GM12878 (cell line): ENCODE measurements at regions of chr4 and their contacts with region 1.

Region 1: DNA sequence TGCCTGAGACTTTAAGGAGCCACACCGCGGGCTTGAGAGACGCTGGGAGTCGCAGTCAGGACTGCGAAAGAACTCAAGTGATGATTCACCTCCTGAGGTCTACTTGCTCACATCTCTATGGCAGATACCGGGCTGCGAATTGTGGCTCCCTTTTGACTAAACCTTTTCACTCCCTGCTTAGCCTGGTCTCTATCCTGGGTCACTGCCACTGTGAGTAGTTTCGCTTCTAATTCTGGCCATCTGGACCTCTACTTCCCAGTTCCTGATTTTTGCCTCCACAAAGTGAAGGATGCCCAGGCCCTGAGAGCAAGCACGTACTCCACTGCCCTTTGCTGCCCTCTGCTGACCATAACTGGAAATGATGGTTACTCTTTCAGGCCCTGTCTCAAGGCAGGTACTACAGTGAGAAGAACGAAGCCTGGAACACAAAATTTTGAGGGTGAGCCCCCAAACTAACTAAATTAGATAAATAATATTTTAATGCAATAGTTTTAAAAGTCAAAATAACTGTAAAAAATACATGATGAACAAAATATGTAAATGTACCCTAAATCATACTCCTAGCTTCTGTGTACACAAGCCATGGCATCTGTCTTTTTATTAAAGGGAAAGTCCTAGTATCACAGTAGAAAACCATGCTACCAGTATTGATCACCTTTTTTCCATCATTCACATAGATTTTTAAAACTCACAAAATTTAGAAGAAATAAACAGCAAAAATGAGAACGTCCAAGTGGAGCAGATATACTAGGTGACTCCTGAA is 16.7 kb downstream of the MAD2L1 start:
- DNase-seq: peak; percentile 64
- ATAC-seq: peak; percentile 97
- H3K4me3 ChIP-seq: no peak overlapping the region; the same call in 1 of the 2 replicates
- H3K27ac ChIP-seq: no peak overlapping the region
- H3K4me1 ChIP-seq: peaks cover 16% of the 10 kb centered on the region
- H3K27me3 ChIP-seq: no peaks in the 10 kb centered on the region
- CTCF ChIP-seq: peak; percentile 83 to 89 (median 86)
- EP300 ChIP-seq: no peak
- POLR2A ChIP-seq: no peak
- RAD21 ChIP-seq: peak; percentile 92

Region 2: GRCh38 chr4:118974758-118975157 is 1075.2 kb before region 1 on chr4:
- CTCF ChIA-PET with region 1: no interaction called
- POLR2A ChIA-PET with region 1: no interaction called
- RAD21 ChIA-PET with region 1: no interaction called
- SMC1A ChIA-PET with region 1: no interaction called
- in situ Hi-C with region 1: loop called (anchors 10 kb)
- intact Hi-C with region 1: no loop called
- DNase-seq: no peak
- ATAC-seq: no peak
- H3K4me3 ChIP-seq: no peak overlapping the region
- H3K27ac ChIP-seq: no peak overlapping the region
- H3K4me1 ChIP-seq: no peaks in the 10 kb centered on the region
- H3K27me3 ChIP-seq: no peaks in the 10 kb centered on the region
- CTCF ChIP-seq: no peak
- EP300 ChIP-seq: no peak
- POLR2A ChIP-seq: no peak
- RAD21 ChIP-seq: no peak

Region 3: GRCh38 chr4:118981839-118982381 is 1068.0 kb before region 1 on chr4:
- CTCF ChIA-PET with region 1: no interaction called
- POLR2A ChIA-PET with region 1: no interaction called
- RAD21 ChIA-PET with region 1: no interaction called
- SMC1A ChIA-PET with region 1: interaction called, 3 read pairs
- in situ Hi-C with region 1: loop called (anchors 10 kb)
- intact Hi-C with region 1: loop called (anchors 5 kb)
- DNase-seq: no peak
- ATAC-seq: peak; percentile 94
- H3K4me3 ChIP-seq: no peak overlapping the region
- H3K27ac ChIP-seq: no peak overlapping the region
- H3K4me1 ChIP-seq: no peaks in the 10 kb centered on the region
- H3K27me3 ChIP-seq: no peaks in the 10 kb centered on the region
- CTCF ChIP-seq: peak; percentile 70 to 80 (median 79)
- EP300 ChIP-seq: no peak
- POLR2A ChIP-seq: no peak
- RAD21 ChIP-seq: peak; percentile 98

Region 4: DNA sequence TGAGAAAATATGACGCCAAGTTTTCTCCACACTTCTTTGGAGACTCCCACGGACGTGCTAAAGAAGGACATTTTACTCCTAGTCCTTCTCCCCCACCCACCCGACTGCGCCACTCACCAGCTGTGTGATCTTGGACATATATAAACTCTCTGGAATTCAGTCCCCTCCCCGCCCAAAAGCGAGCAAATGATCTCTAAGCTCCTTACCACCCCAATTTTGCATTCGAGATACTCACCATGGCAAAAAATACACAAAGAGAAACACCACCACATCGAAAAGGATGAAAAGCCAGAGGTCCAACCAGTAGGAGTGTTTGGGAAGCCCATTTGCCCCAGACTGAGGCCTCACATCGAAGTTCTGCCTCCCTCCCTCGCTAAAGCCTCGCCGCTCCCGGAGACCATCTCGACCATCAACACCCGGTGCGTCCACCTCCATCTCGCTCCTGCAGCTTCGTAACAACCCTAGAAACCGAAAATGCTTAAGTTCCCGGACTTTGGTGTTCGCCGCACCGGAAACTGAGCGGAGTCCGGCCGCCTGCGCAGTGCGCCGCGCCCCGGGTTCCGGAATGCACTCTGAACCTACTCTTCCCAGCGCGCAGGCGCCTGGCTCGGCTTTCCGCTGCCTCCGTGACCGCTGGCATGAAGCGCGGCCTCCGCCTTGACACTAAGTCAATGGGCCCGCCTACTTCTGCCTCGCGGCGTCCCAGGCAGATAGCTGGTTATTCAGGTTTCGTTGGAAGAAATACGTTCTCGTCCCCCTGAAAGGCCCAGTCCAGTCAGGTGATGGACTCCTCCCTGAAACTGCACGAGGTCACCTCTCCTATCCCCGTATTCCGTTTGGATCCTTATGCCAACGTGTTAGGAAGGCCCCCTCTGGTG is 749.6 kb before region 1 on chr4:
- CTCF ChIA-PET with region 1: no interaction called
- POLR2A ChIA-PET with region 1: no interaction called
- RAD21 ChIA-PET with region 1: no interaction called
- SMC1A ChIA-PET with region 1: no interaction called
- in situ Hi-C with region 1: loop called (anchors 5 kb)
- intact Hi-C with region 1: loop called (anchors 5 kb)
- DNase-seq: peak; percentile 80
- ATAC-seq: peak; percentile 99
- H3K4me3 ChIP-seq: peak overlapping the region; percentile 92
- H3K27ac ChIP-seq: peak overlapping the region; percentile 77
- H3K4me1 ChIP-seq: no peaks in the 10 kb centered on the region
- H3K27me3 ChIP-seq: no peaks in the 10 kb centered on the region
- CTCF ChIP-seq: 0 out of 6 replicates have a peak, but pooled peaks of 2 of the 3 experiments have one; percentile 14 to 18
- EP300 ChIP-seq: 0 out of 4 replicates have a peak, but pooled peaks of 1 of the 2 experiments have one; percentile 25
- POLR2A ChIP-seq: peak; percentile 92
- RAD21 ChIP-seq: no peak

Region 5: DNA sequence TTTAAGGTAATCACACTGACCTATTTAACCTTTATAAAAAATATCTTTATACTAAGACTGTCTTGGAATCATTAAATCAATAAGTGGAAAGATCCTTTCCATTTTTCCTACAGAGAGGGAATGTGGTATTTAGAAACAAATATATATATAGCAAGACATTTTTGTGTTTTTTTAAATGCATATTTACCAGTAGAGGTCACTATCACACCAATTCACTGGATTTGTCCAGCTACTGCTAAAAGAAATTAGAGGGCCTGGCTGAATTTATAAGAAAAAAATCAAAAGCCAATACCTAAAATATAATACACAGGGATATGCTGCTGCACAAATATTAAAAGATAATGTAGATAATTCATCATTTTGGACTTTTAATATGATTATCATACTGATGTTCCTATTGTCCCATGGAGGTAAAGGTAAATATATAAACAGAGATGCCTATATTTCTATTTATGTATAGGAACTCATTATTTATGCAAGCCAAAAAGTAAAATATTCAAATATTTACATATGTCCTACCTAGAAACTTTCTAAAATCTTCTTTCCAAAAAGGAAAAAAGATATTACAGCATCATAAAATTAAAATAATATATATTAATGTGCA is 490.8 kb before region 1 on chr4:
- CTCF ChIA-PET with region 1: interaction called, 11 read pairs
- POLR2A ChIA-PET with region 1: no interaction called
- RAD21 ChIA-PET with region 1: interaction called, 7 read pairs
- SMC1A ChIA-PET with region 1: interaction called, 11 read pairs
- in situ Hi-C with region 1: no loop called
- intact Hi-C with region 1: loop called (anchors 1 kb)
- DNase-seq: no peak
- ATAC-seq: 0 out of 3 replicates have a peak, but pooled peaks have one; percentile 34
- H3K4me3 ChIP-seq: no peak overlapping the region
- H3K27ac ChIP-seq: no peak overlapping the region
- H3K4me1 ChIP-seq: no peaks in the 10 kb centered on the region
- H3K27me3 ChIP-seq: no peaks in the 10 kb centered on the region
- CTCF ChIP-seq: peak; percentile 7 to 34 (median 22); a peak in 2 of 6 replicates
- EP300 ChIP-seq: no peak
- POLR2A ChIP-seq: no peak
- RAD21 ChIP-seq: peak; percentile 58

Region 6: DNA sequence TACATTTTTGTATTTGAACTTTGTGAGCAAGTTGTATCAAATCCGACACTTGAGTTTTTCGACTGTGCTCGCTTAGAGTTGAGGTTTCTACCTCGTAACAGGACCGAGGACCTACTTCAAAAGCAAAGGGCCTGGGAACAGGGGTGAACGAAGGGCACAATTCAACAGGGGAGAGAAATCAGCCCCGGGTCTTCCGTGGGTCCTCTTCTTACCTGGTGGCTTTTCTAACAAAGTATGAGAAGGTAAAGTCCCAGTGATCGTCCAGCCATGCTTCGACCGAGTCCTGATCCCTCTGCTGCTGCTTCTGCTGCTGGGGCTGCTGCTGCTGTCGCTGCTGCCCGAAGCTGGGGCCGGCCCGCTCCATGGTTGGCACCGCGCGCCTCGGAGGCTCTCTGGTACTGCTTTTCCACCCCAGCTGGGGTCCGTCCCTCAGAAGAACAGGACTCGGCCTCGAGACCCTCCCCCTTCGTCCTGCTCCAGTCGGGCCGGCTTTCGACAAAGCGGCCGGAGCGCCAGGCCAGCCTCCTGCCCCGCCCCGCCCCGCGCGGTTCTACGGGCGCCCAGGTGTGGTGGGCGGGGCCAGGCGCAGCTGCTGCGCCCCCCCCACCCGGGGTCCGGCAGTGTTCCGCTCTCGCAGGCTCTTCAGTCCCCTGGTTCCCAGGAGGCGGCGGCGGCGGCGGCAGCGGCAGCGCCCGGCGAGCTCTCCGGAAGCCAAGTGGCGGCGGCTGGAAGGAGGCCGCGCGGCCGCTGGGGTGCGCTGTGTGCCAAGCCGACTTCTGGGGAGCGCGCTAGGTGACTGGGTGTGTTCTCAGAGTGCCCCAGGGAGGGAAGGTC is 421.4 kb before region 1 on chr4 and contains the start of gene PDE5A:
- CTCF ChIA-PET with region 1: interaction called, 32 read pairs
- POLR2A ChIA-PET with region 1: no interaction called
- RAD21 ChIA-PET with region 1: interaction called, 31 read pairs
- SMC1A ChIA-PET with region 1: interaction called, 4 read pairs
- in situ Hi-C with region 1: loop called (anchors 5 kb)
- intact Hi-C with region 1: loop called (anchors 1 kb)
- DNase-seq: no peak
- ATAC-seq: peak; percentile 95
- H3K4me3 ChIP-seq: peak within 1 kb of the TSS; percentile 75
- H3K27ac ChIP-seq: no peak within 1 kb of the TSS
- H3K4me1 ChIP-seq: peaks cover 3% of the 10 kb centered on the region
- H3K27me3 ChIP-seq: peaks cover 3 to 5% of the 10 kb centered on the region in 2 experiments; a peak in 3 of 4 replicates
- CTCF ChIP-seq: peak; percentile 63 to 80 (median 76)
- EP300 ChIP-seq: no peak
- POLR2A ChIP-seq: no peak
- RAD21 ChIP-seq: peak; percentile 67
- polyA plus RNA-seq, gene PDE5A: 0.62 to 1.6 TPM

Region 7: DNA sequence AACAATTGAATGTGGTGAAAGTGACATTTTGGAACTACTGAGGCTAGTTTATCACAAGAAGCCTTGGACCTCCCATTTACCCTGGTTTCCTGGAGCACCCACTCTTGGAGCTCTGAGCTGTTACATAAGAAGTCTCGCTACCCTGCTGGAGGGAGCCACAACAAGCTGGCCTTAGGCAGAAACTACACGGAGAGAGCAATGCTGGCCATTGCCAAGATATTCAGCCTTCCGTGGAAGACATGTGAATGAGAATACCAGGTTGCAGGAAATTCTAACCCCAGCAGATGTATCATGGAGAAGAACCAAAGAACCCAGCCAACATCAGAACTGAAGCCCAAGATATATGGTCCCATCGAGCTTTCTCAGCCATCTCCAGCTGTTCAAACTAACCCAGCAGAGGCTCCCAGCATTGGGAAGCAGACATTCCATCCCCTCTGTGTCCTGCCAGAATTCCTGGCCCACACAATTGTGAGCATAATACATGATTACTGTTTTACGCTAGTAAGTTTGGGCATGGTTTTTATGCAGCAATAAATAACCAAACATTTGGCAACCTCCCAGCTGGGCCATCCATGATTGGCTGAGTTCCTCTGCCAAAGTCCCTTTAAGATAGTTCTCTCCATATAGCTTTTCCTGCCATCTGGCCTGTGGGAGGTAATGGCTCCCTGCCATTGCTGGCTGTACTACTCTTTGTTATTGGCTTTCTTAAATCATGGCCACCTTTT is 403.4 kb before region 1 on chr4:
- CTCF ChIA-PET with region 1: no interaction called
- POLR2A ChIA-PET with region 1: no interaction called
- RAD21 ChIA-PET with region 1: no interaction called
- SMC1A ChIA-PET with region 1: no interaction called
- in situ Hi-C with region 1: no loop called
- intact Hi-C with region 1: no loop called
- DNase-seq: no peak
- ATAC-seq: no peak
- H3K4me3 ChIP-seq: no peak overlapping the region
- H3K27ac ChIP-seq: no peak overlapping the region
- H3K4me1 ChIP-seq: no peaks in the 10 kb centered on the region
- H3K27me3 ChIP-seq: no peaks in the 10 kb centered on the region
- CTCF ChIP-seq: no peak
- EP300 ChIP-seq: no peak
- POLR2A ChIP-seq: no peak
- RAD21 ChIP-seq: no peak

Region 8: GRCh38 chr4:120062663-120063195 is 12.8 kb after region 1 on chr4:
- CTCF ChIA-PET with region 1: interaction called, 22 read pairs
- POLR2A ChIA-PET with region 1: interaction called, 5 read pairs
- RAD21 ChIA-PET with region 1: interaction called, 8 read pairs
- SMC1A ChIA-PET with region 1: interaction called, 8 read pairs
- in situ Hi-C with region 1: no loop called
- intact Hi-C with region 1: no loop called
- DNase-seq: no peak
- ATAC-seq: no peak
- H3K4me3 ChIP-seq: peak overlapping the region; percentile 38; the same call in 1 of the 2 replicates
- H3K27ac ChIP-seq: 0 out of 2 replicates have a peak overlapping the region, but pooled peaks have one; percentile 4
- H3K4me1 ChIP-seq: peaks cover 5% of the 10 kb centered on the region; the same call in 1 of the 2 replicates
- H3K27me3 ChIP-seq: no peaks in the 10 kb centered on the region
- CTCF ChIP-seq: no peak
- EP300 ChIP-seq: no peak
- POLR2A ChIP-seq: no peak
- RAD21 ChIP-seq: no peak

Region 9: DNA sequence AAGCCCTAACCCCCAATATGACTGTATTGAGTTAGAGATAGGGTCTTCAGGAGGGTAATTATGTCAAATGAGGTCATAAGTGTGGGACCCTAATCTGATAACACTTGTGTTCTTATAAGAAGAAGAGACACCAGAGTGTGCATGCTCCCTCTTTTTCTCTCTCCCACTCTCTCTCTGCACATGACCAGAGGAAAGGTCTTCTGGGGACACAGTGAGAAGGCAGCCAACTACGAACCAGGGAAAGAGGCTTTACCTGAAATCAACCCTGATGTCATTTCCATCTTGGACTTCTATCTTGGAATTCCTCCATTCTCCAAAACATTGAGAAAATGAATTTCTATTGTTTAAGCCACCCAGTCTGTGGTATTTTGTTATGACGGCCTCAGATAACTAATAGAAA is 114.0 kb after region 1 on chr4:
- CTCF ChIA-PET with region 1: no interaction called
- POLR2A ChIA-PET with region 1: no interaction called
- RAD21 ChIA-PET with region 1: no interaction called
- SMC1A ChIA-PET with region 1: no interaction called
- in situ Hi-C with region 1: no loop called
- intact Hi-C with region 1: no loop called
- DNase-seq: no peak
- ATAC-seq: no peak
- H3K4me3 ChIP-seq: no peak overlapping the region
- H3K27ac ChIP-seq: no peak overlapping the region
- H3K4me1 ChIP-seq: no peaks in the 10 kb centered on the region
- H3K27me3 ChIP-seq: no peaks in the 10 kb centered on the region
- CTCF ChIP-seq: no peak
- EP300 ChIP-seq: no peak
- POLR2A ChIP-seq: no peak
- RAD21 ChIP-seq: no peak

Region 10: DNA sequence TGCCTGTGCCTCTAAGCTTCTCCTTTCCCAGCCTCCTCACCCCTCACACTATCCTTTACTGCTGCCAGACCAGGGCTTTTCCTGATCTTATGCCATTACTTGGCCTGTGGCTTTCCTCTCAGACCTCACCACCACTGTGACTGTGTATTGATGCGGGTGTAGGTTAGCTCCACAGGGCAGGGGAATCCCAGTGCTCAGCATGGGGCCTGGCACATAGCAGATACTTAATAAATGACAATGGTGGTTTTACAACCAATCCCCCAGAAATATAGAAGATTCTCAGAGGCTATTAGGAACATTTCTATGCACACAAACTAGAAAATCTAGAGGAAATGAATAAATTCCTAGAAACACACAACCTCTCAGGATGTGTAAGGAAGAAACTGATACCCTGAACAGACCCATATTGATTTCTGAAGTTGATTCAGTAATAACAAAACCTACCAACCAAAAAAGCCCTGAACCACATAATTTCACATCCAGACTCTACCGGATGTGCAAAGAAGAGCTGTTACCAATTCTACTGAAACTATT is 1460.5 kb after region 1 on chr4:
- CTCF ChIA-PET with region 1: no interaction called
- POLR2A ChIA-PET with region 1: no interaction called
- RAD21 ChIA-PET with region 1: no interaction called
- SMC1A ChIA-PET with region 1: no interaction called
- in situ Hi-C with region 1: no loop called
- intact Hi-C with region 1: no loop called
- DNase-seq: no peak
- ATAC-seq: peak; percentile 83
- H3K4me3 ChIP-seq: no peak overlapping the region
- H3K27ac ChIP-seq: no peak overlapping the region
- H3K4me1 ChIP-seq: peaks cover 7% of the 10 kb centered on the region
- H3K27me3 ChIP-seq: no peaks in the 10 kb centered on the region
- CTCF ChIP-seq: no peak
- EP300 ChIP-seq: no peak
- POLR2A ChIP-seq: no peak
- RAD21 ChIP-seq: no peak